CD4-positive, alpha-beta memory T cell (primary cell): ENCODE measurements at regions of chr11 and their contacts with region 1.

Region 1: DNA sequence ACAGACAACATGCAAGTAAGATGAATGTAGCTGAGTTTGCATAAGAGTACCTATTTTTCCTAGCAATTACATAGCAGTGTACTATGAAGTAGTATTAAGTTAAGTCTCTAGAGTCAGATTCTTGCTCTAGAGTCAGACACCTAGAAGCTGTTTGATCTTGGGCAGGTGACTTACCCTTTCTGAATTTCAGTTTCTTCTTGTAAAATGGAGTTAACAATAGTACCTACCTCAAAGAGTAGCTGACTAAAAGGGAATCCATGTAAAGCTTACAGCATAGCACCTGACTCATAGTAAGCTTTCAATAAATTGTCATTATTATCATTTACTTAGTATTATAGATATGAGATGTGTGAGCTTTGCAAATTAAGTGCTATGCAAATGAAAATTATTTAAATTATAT is 47.8 kb upstream of the PTPRJ start:
- DNase-seq: no peak
- H3K4me3 ChIP-seq: no peak overlapping the region
- H3K4me3 Mint-ChIP-seq: no peak overlapping the region
- H3K27ac ChIP-seq: no peak overlapping the region
- H3K27ac Mint-ChIP-seq: no peak overlapping the region
- H3K4me1 ChIP-seq: peaks cover 10% of the 10 kb centered on the region
- H3K4me1 Mint-ChIP-seq: peaks cover 8 to 20% (median 15%) of the 10 kb centered on the region in 4 donors
- H3K27me3 ChIP-seq: no peaks in the 10 kb centered on the region
- H3K27me3 Mint-ChIP-seq: no peaks in the 10 kb centered on the region

Region 2: DNA sequence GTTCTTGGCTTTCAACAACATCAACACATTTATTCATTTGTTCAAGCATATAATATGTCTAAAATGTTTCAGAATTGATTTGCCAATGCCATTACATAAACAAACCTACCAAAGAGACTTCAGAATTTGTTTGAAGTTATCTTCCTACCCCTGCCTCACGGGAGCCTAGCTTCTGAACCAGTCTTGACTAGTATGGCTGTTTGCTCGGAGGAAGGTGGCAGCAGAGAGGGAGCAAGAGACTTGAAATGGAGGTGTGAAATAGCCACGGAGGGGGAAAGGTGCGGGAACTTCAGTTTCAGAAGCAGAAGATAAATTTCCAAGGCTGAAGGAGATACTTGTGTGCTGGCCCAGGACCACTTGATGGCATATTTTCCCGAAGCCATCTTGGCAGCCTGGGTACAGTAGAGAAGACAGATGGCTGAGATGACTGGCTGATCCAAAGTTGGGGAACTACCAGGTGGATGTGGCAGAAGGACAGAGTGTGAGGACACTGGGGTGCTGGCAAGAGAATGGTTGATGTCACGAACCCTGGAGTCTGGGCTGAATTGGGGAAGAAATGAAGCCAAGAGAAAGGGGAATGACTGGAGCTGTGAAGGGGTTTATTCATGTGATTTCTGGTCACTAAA is 276.2 kb before region 1 on chr11:
- CTCF ChIA-PET with region 1: no interaction called
- POLR2A ChIA-PET with region 1: no interaction called
- intact Hi-C with region 1: no loop called
- DNase-seq: no peak
- H3K4me3 ChIP-seq: no peak overlapping the region
- H3K4me3 Mint-ChIP-seq: no peak overlapping the region
- H3K27ac ChIP-seq: no peak overlapping the region
- H3K27ac Mint-ChIP-seq: no peak overlapping the region
- H3K4me1 ChIP-seq: no peaks in the 10 kb centered on the region
- H3K4me1 Mint-ChIP-seq: no peaks in the 10 kb centered on the region
- H3K27me3 ChIP-seq: no peaks in the 10 kb centered on the region
- H3K27me3 Mint-ChIP-seq: peaks cover 0 to 4% of the 10 kb centered on the region in 2 donors

Region 3: DNA sequence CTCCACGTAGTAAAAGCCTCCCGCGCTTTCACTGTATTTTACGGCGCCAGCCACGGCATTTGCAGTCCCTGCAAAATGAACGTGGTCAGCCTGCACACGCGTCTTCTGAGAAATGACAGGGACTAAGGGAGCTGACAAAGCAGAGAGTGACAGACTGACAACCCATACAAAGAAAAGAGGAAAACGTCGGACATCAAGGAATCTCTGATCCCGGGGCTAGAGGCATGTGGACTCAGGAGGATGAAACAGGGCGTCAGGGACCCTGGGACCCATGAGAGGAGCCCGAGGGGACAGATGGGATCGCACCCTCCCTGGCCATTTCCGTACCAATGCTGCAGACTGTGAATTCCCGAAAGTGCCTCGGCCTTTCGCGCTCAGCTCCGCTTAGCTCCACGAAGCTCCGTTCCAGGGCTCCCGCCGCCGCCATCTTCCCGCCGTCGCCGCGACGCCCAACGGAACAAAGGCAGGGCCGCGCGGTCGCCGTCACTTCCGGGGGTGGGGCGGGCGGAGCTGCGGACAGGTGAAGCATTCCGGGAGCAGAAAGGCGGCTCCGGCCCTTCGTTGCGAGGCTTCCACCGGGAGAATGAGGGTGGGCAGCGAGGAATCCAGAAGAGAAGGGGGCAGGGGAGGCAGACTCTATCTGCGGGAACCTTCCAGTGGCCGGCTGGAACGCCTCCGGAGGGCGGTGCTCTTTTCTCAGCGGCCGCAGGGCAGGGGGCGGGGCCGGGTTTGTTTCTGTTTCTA is 84.5 kb before region 1 on chr11 and contains the start of gene NUP160:
- CTCF ChIA-PET with region 1: interaction called, 13 read pairs
- POLR2A ChIA-PET with region 1: no interaction called
- intact Hi-C with region 1: no loop called
- DNase-seq: peak; percentile 85 to 88 (median 86)
- H3K4me3 ChIP-seq: peak within 1 kb of the TSS; percentile 70 to 91
- H3K4me3 Mint-ChIP-seq: peak within 1 kb of the TSS; percentile 95 to 100 (median 99)
- H3K27ac ChIP-seq: peak within 1 kb of the TSS; percentile 97
- H3K27ac Mint-ChIP-seq: peak within 1 kb of the TSS; percentile 93 to 100 (median 99)
- H3K4me1 ChIP-seq: peaks cover 64% of the 10 kb centered on the region
- H3K4me1 Mint-ChIP-seq: peaks cover 31 to 72% (median 51%) of the 10 kb centered on the region in 4 donors
- H3K27me3 ChIP-seq: no peaks in the 10 kb centered on the region
- H3K27me3 Mint-ChIP-seq: no peaks in the 10 kb centered on the region
- total RNA-seq, gene NUP160: 57.6 to 62.2 TPM

Region 4: DNA sequence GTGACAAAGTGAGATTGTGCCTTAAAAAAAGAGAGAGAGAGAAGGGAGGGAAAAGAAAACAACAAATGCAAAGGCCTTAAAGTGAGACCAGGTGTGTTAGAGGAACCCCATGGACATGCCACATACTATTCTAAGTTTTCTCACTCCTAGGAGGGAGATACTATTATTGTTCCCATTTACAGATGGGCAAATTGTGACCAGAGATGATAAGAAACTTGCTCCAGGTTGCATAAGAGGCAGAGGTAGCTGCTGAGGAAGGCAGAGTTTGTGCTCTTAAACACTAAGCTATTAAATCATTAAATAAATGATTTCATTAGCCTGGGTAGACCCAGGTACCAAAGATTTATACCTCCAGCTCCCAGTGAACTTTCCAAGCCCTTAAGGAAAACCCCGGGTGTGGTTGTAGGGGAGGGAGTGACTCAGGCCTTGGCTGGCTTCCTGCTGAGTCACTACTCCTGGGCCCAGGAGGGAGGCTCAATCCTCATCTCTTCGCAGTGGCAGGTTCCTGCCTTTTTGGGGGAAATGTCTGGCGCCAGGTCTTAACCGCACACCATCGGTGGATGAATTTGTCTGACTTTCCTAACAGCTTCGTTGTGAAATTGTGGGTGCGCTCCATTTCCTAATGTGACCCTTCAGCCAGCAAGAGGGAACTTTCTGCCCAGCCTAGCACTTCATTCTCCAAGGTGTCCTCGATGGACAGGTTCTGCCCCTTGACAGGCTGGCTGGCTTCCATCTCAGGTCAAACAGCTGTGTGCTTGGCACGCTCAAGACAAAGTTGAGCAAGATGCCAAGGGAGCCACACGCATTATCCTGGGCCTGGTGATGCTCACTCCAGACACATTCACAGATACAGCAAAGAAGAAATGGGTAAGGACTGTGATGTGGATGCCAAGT is 14.4 kb after region 1 on chr11:
- CTCF ChIA-PET with region 1: interaction called, 20 read pairs
- POLR2A ChIA-PET with region 1: no interaction called
- intact Hi-C with region 1: no loop called
- DNase-seq: no peak
- H3K4me3 ChIP-seq: no peak overlapping the region
- H3K4me3 Mint-ChIP-seq: no peak overlapping the region
- H3K27ac ChIP-seq: no peak overlapping the region
- H3K27ac Mint-ChIP-seq: peak overlapping the region in 2 of 7 donors; percentile 60 to 78
- H3K4me1 ChIP-seq: peaks cover 18% of the 10 kb centered on the region
- H3K4me1 Mint-ChIP-seq: peaks cover 11 to 38% (median 16%) of the 10 kb centered on the region in 4 donors
- H3K27me3 ChIP-seq: no peaks in the 10 kb centered on the region
- H3K27me3 Mint-ChIP-seq: no peaks in the 10 kb centered on the region

Region 5: GRCh38 chr11:48001438-48002021 is 69.0 kb after region 1 on chr11:
- CTCF ChIA-PET with region 1: interaction called, 13 read pairs
- POLR2A ChIA-PET with region 1: interaction called, 6 read pairs
- intact Hi-C with region 1: no loop called
- DNase-seq: peak; percentile 90 to 97 (median 95)
- H3K4me3 ChIP-seq: peak overlapping the region in 1 of 2 donors; percentile 14
- H3K4me3 Mint-ChIP-seq: peak overlapping the region; percentile 66 to 93 (median 76)
- H3K27ac ChIP-seq: peak overlapping the region; percentile 65
- H3K27ac Mint-ChIP-seq: peak overlapping the region; percentile 90 to 99 (median 97)
- H3K4me1 ChIP-seq: peaks cover 95% of the 10 kb centered on the region
- H3K4me1 Mint-ChIP-seq: peaks cover 61 to 93% (median 80%) of the 10 kb centered on the region in 4 donors
- H3K27me3 ChIP-seq: no peaks in the 10 kb centered on the region
- H3K27me3 Mint-ChIP-seq: no peaks in the 10 kb centered on the region

Region 6: GRCh38 chr11:48097041-48097476 is 164.5 kb after region 1 on chr11:
- CTCF ChIA-PET with region 1: interaction called, 12 read pairs
- POLR2A ChIA-PET with region 1: no interaction called
- intact Hi-C with region 1: no loop called
- DNase-seq: no peak
- H3K4me3 ChIP-seq: no peak overlapping the region
- H3K4me3 Mint-ChIP-seq: no peak overlapping the region
- H3K27ac ChIP-seq: no peak overlapping the region
- H3K27ac Mint-ChIP-seq: peak overlapping the region in 3 of 7 donors; percentile 1 to 52 (median 29)
- H3K4me1 ChIP-seq: peaks cover 37% of the 10 kb centered on the region
- H3K4me1 Mint-ChIP-seq: peaks cover 41 to 61% (median 52%) of the 10 kb centered on the region in 4 donors
- H3K27me3 ChIP-seq: no peaks in the 10 kb centered on the region
- H3K27me3 Mint-ChIP-seq: no peaks in the 10 kb centered on the region

Region 7: DNA sequence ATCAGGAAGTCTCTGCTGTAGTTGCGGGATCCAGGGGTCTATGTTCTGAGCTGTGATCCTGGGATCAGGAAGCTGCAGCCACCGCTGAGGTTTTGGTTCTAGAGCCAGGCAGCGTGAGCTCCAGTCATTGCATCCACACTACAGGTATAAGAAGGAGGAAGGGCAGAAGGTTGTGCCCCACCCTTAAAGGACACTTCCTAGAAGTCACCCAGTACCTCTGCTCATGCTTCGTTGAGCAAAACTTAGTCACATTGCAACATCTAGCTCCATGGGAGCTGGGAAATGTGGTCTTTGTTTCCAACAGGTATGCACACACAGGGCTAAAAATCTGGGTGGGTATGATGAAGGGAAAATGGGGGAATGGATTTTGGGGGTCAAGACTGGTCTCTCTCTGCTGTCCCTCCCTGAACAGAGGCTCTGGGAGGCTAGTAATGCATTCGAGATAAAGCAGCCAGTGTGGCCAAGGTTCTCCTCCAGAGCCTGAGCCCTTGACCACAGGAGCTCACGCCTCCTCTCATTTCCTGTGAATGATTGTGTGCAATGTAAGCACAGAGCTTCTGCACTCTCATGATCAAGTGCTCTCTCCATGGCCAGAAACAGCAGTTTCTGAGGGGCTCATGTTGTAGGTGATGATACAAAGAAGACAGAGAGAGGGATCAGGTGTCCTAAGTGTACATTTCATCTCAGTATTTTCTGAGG is 197.3 kb after region 1 on chr11:
- CTCF ChIA-PET with region 1: no interaction called
- POLR2A ChIA-PET with region 1: no interaction called
- intact Hi-C with region 1: no loop called
- DNase-seq: no peak
- H3K4me3 ChIP-seq: no peak overlapping the region
- H3K4me3 Mint-ChIP-seq: no peak overlapping the region
- H3K27ac ChIP-seq: no peak overlapping the region
- H3K27ac Mint-ChIP-seq: peak overlapping the region in 5 of 7 donors; percentile 15 to 70 (median 44)
- H3K4me1 ChIP-seq: no peaks in the 10 kb centered on the region
- H3K4me1 Mint-ChIP-seq: peaks cover 0 to 7% (median 2%) of the 10 kb centered on the region in 4 donors
- H3K27me3 ChIP-seq: no peaks in the 10 kb centered on the region
- H3K27me3 Mint-ChIP-seq: no peaks in the 10 kb centered on the region

Region 8: DNA sequence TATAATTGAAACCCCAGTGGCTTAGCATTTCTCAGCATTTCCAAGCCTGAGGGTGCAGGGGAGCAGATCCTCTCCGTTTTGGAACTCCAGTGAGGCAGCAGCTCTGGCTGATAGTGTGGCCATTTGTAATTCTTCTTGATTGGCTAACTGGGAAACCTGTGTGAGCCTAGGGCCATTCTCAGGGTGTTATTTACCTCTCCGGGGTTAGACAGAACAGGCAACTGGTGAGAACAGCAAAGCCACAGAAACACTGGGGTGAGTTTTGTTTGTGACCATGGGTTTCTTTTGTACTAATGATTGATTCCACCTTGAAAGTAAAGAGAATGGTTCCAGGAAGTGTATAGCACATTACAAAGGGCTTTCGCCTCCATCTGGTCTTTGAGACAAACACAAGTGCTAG is 310.0 kb after region 1 on chr11:
- CTCF ChIA-PET with region 1: no interaction called
- POLR2A ChIA-PET with region 1: no interaction called
- intact Hi-C with region 1: no loop called
- DNase-seq: no peak
- H3K4me3 ChIP-seq: no peak overlapping the region
- H3K4me3 Mint-ChIP-seq: no peak overlapping the region
- H3K27ac ChIP-seq: no peak overlapping the region
- H3K27ac Mint-ChIP-seq: no peak overlapping the region
- H3K4me1 ChIP-seq: no peaks in the 10 kb centered on the region
- H3K4me1 Mint-ChIP-seq: peaks cover 0 to 2% (median 0%) of the 10 kb centered on the region in 4 donors
- H3K27me3 ChIP-seq: no peaks in the 10 kb centered on the region
- H3K27me3 Mint-ChIP-seq: peaks cover 14 to 27% of the 10 kb centered on the region in 2 donors

Region 9: DNA sequence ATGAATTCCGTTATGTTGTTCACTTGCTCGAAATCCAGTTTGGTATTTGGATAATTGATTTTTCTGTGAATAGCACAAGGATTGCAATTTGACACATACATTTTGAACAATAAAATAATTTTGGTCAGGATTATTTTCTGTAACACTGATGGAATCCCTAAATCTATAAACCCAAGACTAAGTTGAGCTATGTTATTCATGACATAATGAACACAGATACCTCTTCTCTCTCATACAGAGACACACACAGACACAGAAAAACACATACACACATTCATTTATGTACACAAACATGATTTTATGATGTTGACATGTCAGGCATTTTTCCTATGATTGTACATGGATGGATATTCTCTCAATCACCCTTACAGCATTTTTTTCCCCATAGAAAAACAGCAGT is 433.8 kb after region 1 on chr11 and contains the start of gene OR4C5:
- CTCF ChIA-PET with region 1: no interaction called
- POLR2A ChIA-PET with region 1: no interaction called
- intact Hi-C with region 1: no loop called
- DNase-seq: no peak
- H3K4me3 ChIP-seq: no peak within 1 kb of the TSS
- H3K4me3 Mint-ChIP-seq: no peak within 1 kb of the TSS
- H3K27ac ChIP-seq: no peak within 1 kb of the TSS
- H3K27ac Mint-ChIP-seq: no peak within 1 kb of the TSS
- H3K4me1 ChIP-seq: no peaks in the 10 kb centered on the region
- H3K4me1 Mint-ChIP-seq: peaks cover 0 to 2% (median 0%) of the 10 kb centered on the region in 4 donors
- H3K27me3 ChIP-seq: no peaks in the 10 kb centered on the region
- H3K27me3 Mint-ChIP-seq: peaks cover 0 to 2% of the 10 kb centered on the region in 2 donors
- total RNA-seq, gene OR4C5: not detected